Activated B cell treated with CpG ODN at 0.5 μM for 24 hours (primary cell): ENCODE measurements at regions of chr10 and their contacts with region 1.

Region 1: GRCh38 chr10:33155720-33156638 is 178.5 kb downstream of the NRP1 start:
- DNase-seq: no peak
- ATAC-seq: peak; percentile 65
- H3K4me3 Mint-ChIP-seq: no peak overlapping the region
- H3K27ac Mint-ChIP-seq: no peak overlapping the region
- H3K4me1 Mint-ChIP-seq: peaks cover 41% of the 10 kb centered on the region
- H3K27me3 Mint-ChIP-seq: peaks cover 2% of the 10 kb centered on the region
- CTCF ChIP-seq: no peak

Region 2: GRCh38 chr10:32650246-32650655 is 505.7 kb before region 1 on chr10:
- CTCF ChIA-PET with region 1: no interaction called
- POLR2A ChIA-PET with region 1: no interaction called
- intact Hi-C with region 1: loop called (anchors 5 kb)
- DNase-seq: no peak
- ATAC-seq: peak; percentile 57
- H3K4me3 Mint-ChIP-seq: no peak overlapping the region
- H3K27ac Mint-ChIP-seq: no peak overlapping the region
- H3K4me1 Mint-ChIP-seq: peaks cover 4% of the 10 kb centered on the region
- H3K27me3 Mint-ChIP-seq: no peaks in the 10 kb centered on the region
- CTCF ChIP-seq: no peak

Region 3: GRCh38 chr10:32795598-32796183 is 360.3 kb before region 1 on chr10:
- CTCF ChIA-PET with region 1: interaction called, 8 read pairs
- POLR2A ChIA-PET with region 1: no interaction called
- intact Hi-C with region 1: loop called (anchors 1 kb)
- DNase-seq: no peak
- ATAC-seq: peak; percentile 45
- H3K4me3 Mint-ChIP-seq: no peak overlapping the region
- H3K27ac Mint-ChIP-seq: no peak overlapping the region
- H3K4me1 Mint-ChIP-seq: no peaks in the 10 kb centered on the region
- H3K27me3 Mint-ChIP-seq: no peaks in the 10 kb centered on the region
- CTCF ChIP-seq: peak; percentile 36

Region 4: GRCh38 chr10:33100781-33101391 is 55.1 kb before region 1 on chr10:
- CTCF ChIA-PET with region 1: no interaction called
- POLR2A ChIA-PET with region 1: no interaction called
- intact Hi-C with region 1: no loop called
- DNase-seq: no peak
- ATAC-seq: no peak
- H3K4me3 Mint-ChIP-seq: no peak overlapping the region
- H3K27ac Mint-ChIP-seq: peak overlapping the region; percentile 56
- H3K4me1 Mint-ChIP-seq: peaks cover 60% of the 10 kb centered on the region
- H3K27me3 Mint-ChIP-seq: no peaks in the 10 kb centered on the region
- CTCF ChIP-seq: no peak

Region 5: DNA sequence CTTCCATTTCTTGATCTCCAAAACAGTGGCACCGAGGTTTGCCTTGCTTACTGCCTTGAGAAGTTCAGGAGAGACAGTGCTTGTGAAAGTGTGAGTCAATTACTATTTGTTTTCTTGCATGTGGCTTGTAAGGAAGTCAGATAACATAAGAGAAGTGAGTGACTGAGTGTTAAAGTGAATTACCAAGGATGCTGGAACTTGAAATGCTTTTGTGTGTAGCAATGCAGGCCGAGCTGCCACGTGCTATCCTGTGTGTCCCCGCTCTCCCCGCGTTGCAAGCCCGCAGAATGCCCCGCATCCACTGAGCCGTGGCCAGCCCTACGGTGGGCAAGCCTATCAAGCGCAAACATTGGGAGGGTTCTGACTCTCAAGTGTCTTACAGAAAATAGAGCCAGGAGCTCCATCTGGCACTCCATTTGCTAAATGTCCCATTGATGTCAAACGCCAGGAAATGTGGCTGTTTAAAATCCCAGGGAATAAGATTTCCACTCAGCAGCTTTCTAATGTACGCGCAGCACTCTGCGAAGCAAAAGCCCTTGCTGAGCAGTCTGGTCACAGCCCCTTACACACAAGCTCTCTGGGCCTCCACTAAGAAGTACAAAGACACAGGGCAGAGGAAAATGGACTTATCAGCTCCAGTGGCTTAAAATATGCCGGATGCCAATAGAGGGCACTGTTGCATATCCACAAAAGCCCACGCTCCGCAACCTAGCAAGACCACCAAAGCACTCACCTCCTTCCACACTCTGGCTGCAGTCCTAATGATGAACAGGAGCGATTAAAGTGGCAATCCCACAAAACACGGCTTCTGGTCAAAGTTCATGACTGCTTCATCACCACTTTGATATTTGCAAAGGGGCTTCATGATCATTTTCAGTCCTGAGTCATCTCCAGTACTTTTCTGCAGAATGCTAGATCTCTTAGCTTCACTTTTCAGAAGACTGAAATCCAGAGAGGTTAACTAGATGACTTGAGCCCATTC is 40.0 kb before region 1 on chr10:
- CTCF ChIA-PET with region 1: interaction called, 7 read pairs
- POLR2A ChIA-PET with region 1: interaction called, 4 read pairs
- intact Hi-C with region 1: loop called (anchors 5 kb)
- DNase-seq: no peak
- ATAC-seq: no peak
- H3K4me3 Mint-ChIP-seq: no peak overlapping the region
- H3K27ac Mint-ChIP-seq: peak overlapping the region; percentile 64
- H3K4me1 Mint-ChIP-seq: peaks cover 88% of the 10 kb centered on the region
- H3K27me3 Mint-ChIP-seq: no peaks in the 10 kb centered on the region
- CTCF ChIP-seq: no peak